HCT116 (cell line): ENCODE measurements at regions of chr15 and their contacts with region 1.

Region 1: DNA sequence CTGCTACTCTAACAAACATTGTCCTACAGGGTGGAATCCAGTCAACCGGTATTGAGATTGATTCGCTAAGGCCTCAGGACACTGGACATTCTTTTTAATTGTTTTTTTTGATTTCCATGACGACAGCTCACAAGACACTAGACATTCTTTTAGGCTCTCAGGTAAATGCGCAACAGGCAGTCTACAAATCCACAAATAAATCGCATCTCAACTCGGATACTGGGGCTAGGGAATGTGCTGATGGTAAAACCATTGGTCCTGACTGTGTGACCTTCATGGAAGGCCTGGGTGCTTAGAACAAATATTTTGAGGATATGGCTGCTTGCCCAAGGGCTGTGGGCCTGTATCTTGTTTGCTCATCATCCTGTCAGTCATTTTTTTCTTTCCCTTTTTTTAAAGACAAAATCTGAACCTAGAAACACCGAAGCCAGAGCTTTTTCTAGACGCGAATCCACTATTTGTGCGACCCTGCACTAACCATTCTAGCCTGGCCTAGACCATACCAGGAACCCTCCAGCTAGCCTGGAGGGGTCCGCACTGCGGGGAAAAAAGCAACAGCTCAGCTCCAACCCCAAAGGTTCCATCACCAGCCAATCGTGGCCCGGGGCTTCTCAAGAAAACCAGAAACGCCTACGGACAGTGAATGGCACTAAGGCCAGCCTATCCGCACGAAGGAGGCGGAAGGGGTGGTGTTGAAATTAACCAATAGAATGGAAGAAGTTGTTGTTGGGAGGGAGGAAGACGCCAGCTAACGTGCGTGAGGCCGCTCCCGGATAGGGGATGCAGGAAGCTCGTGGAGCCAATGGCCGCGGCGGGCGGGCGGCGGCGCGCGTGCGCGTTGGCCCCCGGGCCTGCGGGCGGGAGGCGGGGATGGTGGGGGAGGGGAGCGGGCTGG is 18.1 kb upstream of the CHD2 start:
- DNase-seq: peak; percentile 99
- ATAC-seq: peak; percentile 98
- H3K4me3 ChIP-seq: peak overlapping the region; percentile 85 to 95
- H3K27ac ChIP-seq: peak overlapping the region; percentile 96
- H3K4me1 ChIP-seq: peaks cover 15 to 26% of the 10 kb centered on the region in 2 experiments; a peak in 3 of 4 replicates
- H3K27me3 ChIP-seq: no peaks in the 10 kb centered on the region
- CTCF ChIP-seq: no peak
- POLR2A ChIP-seq: peak; percentile 79
- RAD21 ChIP-seq: no peak

Region 2: GRCh38 chr15:92571824-92572223 is 310.2 kb before region 1 on chr15:
- CTCF ChIA-PET with region 1: no interaction called
- POLR2A ChIA-PET with region 1: no interaction called
- RAD21 ChIA-PET with region 1: no interaction called
- intact Hi-C with region 1: no loop called
- DNase-seq: no peak
- ATAC-seq: no peak
- H3K4me3 ChIP-seq: no peak overlapping the region
- H3K27ac ChIP-seq: no peak overlapping the region
- H3K4me1 ChIP-seq: no peaks in the 10 kb centered on the region
- H3K27me3 ChIP-seq: peaks cover 51% of the 10 kb centered on the region
- CTCF ChIP-seq: no peak
- POLR2A ChIP-seq: no peak
- RAD21 ChIP-seq: no peak

Region 3: GRCh38 chr15:92788196-92788595 is 93.9 kb before region 1 on chr15:
- CTCF ChIA-PET with region 1: no interaction called
- POLR2A ChIA-PET with region 1: no interaction called
- RAD21 ChIA-PET with region 1: no interaction called
- intact Hi-C with region 1: no loop called
- DNase-seq: no peak
- ATAC-seq: no peak
- H3K4me3 ChIP-seq: no peak overlapping the region
- H3K27ac ChIP-seq: no peak overlapping the region
- H3K4me1 ChIP-seq: no peaks in the 10 kb centered on the region
- H3K27me3 ChIP-seq: no peaks in the 10 kb centered on the region
- CTCF ChIP-seq: no peak
- POLR2A ChIP-seq: no peak
- RAD21 ChIP-seq: no peak

Region 4: GRCh38 chr15:92803847-92804609 is 78.0 kb before region 1 on chr15:
- CTCF ChIA-PET with region 1: interaction called, 7 read pairs
- POLR2A ChIA-PET with region 1: interaction called, 17 read pairs
- RAD21 ChIA-PET with region 1: interaction called in 1 of 2 experiments, 3 read pairs
- intact Hi-C with region 1: loop called (anchors 2 kb)
- DNase-seq: peak; percentile 99
- ATAC-seq: peak; percentile 70
- H3K4me3 ChIP-seq: peak overlapping the region; percentile 11; a peak in 2 of 4 replicates
- H3K27ac ChIP-seq: peak overlapping the region; percentile 99
- H3K4me1 ChIP-seq: peaks cover 65 to 94% of the 10 kb centered on the region in 2 experiments
- H3K27me3 ChIP-seq: no peaks in the 10 kb centered on the region
- CTCF ChIP-seq: no peak
- POLR2A ChIP-seq: no peak
- RAD21 ChIP-seq: no peak

Region 5: GRCh38 chr15:92820236-92821021 is 61.6 kb before region 1 on chr15:
- CTCF ChIA-PET with region 1: no interaction called
- POLR2A ChIA-PET with region 1: interaction called, 13 read pairs
- RAD21 ChIA-PET with region 1: interaction called, 5 to 6 read pairs
- intact Hi-C with region 1: loop called (anchors 5 kb)
- DNase-seq: peak; percentile 83
- ATAC-seq: peak; percentile 77
- H3K4me3 ChIP-seq: peak overlapping the region; percentile 57 to 58
- H3K27ac ChIP-seq: peak overlapping the region; percentile 83
- H3K4me1 ChIP-seq: peaks cover 41 to 66% of the 10 kb centered on the region in 2 experiments
- H3K27me3 ChIP-seq: no peaks in the 10 kb centered on the region
- CTCF ChIP-seq: no peak
- POLR2A ChIP-seq: peak; percentile 79
- RAD21 ChIP-seq: no peak; the same call in 1 of the 2 replicates

Region 6: GRCh38 chr15:92868992-92869988 is 12.8 kb before region 1 on chr15:
- CTCF ChIA-PET with region 1: no interaction called
- POLR2A ChIA-PET with region 1: interaction called, 17 read pairs
- RAD21 ChIA-PET with region 1: no interaction called
- intact Hi-C with region 1: no loop called
- DNase-seq: no peak
- ATAC-seq: no peak
- H3K4me3 ChIP-seq: no peak overlapping the region
- H3K27ac ChIP-seq: no peak overlapping the region
- H3K4me1 ChIP-seq: peaks cover 4 to 8% of the 10 kb centered on the region in 2 experiments; a peak in 3 of 4 replicates
- H3K27me3 ChIP-seq: no peaks in the 10 kb centered on the region
- CTCF ChIP-seq: no peak
- POLR2A ChIP-seq: no peak
- RAD21 ChIP-seq: no peak

Region 7: GRCh38 chr15:92917606-92918407 is 35.8 kb after region 1 on chr15:
- CTCF ChIA-PET with region 1: interaction called, 3 read pairs
- POLR2A ChIA-PET with region 1: interaction called, 10 read pairs
- RAD21 ChIA-PET with region 1: no interaction called
- intact Hi-C with region 1: no loop called
- DNase-seq: peak; percentile 90
- ATAC-seq: peak; percentile 50
- H3K4me3 ChIP-seq: no peak overlapping the region
- H3K27ac ChIP-seq: peak overlapping the region; percentile 87
- H3K4me1 ChIP-seq: peaks cover 64 to 94% of the 10 kb centered on the region in 2 experiments
- H3K27me3 ChIP-seq: no peaks in the 10 kb centered on the region
- CTCF ChIP-seq: peak; percentile 77 to 93 (median 78)
- POLR2A ChIP-seq: no peak
- RAD21 ChIP-seq: peak; percentile 93